ENCODE measurements at regions of chr5 and their contacts with region 1.

Region 1: DNA sequence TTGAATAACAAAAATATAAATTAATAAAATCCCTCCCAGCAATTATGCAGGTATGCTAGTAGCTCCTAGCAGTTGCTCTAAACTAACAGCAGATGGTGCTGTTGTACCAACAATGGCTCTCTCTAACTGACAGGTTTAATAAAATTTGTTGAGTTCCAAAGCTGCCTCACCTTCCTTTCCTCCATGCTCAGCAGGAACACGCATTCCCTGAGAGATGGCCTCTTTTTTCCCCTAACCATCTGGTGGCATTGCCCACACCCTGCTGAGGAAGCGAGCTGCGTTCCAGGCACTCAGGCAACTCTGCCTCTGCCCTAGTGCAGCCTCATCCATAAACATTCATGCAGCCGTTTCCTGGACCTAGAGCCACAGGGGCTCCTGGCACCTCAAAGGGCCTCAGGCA is 106.2 kb downstream of the KLHL3 start:
- DNase-seq: no peak
- H3K4me3 ChIP-seq: no peak overlapping the region
- CTCF ChIP-seq: peak; percentile 60

Region 2: GRCh38 chr5:137605411-137605810 is 24.2 kb before region 1 on chr5:
- CTCF ChIA-PET with region 1: no interaction called
- POLR2A ChIA-PET with region 1: no interaction called
- DNase-seq: no peak
- H3K4me3 ChIP-seq: no peak overlapping the region
- CTCF ChIP-seq: peak; percentile 34

Region 3: DNA sequence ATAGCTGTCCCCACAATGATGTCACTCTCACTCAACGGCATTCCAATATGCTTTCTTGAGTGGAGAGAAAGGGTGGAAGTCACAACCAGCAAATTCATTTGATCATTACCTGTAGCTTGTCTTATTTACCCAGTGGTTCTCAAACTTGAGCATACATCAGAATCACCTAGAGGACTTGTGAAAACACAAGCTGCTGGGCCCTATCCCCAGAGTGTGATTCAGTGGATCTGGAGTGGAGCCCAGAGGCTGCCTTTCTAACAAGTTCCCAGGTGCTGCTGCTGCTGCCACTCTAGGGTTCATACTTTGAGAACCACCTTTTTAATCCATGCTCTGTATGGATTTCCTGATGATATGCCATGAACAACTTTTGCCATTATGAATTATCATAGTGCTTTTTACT is 11.5 kb after region 1 on chr5:
- CTCF ChIA-PET with region 1: interaction called, 17 read pairs
- POLR2A ChIA-PET with region 1: no interaction called
- DNase-seq: no peak
- H3K4me3 ChIP-seq: no peak overlapping the region
- CTCF ChIP-seq: no peak

Region 4: GRCh38 chr5:137665678-137666460 is 36.2 kb after region 1 on chr5:
- CTCF ChIA-PET with region 1: interaction called, 55 read pairs
- POLR2A ChIA-PET with region 1: no interaction called
- DNase-seq: no peak
- H3K4me3 ChIP-seq: no peak overlapping the region
- CTCF ChIP-seq: no peak

Region 5: DNA sequence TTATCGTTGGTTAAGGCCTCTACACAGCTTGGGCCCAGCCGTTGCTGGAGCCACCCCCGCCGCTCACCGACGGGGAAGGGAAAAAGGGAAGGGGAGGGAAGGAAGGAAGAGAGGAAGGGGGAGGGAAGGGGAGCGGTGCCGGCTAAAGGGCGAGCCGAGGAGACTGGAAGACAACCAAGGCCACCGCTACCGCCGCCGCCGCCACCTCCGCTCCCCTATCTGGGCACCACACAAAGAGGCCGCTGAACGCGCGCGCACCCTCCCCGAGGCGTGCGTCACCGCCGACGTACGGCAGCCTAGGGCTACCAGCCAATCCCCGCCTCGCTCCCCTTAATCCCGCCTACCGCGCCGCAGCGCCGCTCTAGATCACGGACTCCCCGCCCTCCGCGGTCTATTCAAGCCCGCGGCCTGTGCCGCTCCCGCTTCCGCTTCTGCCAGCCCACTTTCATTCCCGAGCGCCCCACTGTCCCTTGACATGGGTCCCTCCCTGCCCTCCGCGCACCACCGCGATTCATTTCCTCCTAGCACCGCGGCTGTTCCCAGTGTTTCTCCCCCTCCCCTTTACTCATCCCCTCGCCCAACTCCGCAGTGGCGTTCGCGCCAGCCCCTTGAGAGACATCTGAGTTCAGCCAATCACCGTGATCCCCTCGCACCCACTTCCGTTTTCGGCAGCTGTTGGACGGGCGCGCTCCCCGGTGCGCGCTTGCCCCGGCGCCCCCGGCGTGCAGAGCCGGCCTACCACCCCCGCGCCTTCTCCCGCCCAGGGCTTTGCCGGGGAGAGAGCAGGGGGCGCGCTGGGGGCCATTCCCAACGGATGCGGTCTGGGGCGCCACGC is 124.7 kb after region 1 on chr5 and contains the start of gene HNRNPA0:
- CTCF ChIA-PET with region 1: interaction called, 748 read pairs
- POLR2A ChIA-PET with region 1: interaction called, 3 read pairs
- DNase-seq: peak; percentile 78
- H3K4me3 ChIP-seq: peak within 1 kb of the TSS; percentile 87
- CTCF ChIP-seq: no peak

Region 6: GRCh38 chr5:138128334-138128733 is 498.7 kb after region 1 on chr5:
- CTCF ChIA-PET with region 1: interaction called, 13 read pairs
- POLR2A ChIA-PET with region 1: no interaction called
- DNase-seq: no peak
- H3K4me3 ChIP-seq: no peak overlapping the region
- CTCF ChIP-seq: no peak